GM13977 (cell line): ENCODE measurements at regions of chr9 and their contacts with region 1.

Region 1: DNA sequence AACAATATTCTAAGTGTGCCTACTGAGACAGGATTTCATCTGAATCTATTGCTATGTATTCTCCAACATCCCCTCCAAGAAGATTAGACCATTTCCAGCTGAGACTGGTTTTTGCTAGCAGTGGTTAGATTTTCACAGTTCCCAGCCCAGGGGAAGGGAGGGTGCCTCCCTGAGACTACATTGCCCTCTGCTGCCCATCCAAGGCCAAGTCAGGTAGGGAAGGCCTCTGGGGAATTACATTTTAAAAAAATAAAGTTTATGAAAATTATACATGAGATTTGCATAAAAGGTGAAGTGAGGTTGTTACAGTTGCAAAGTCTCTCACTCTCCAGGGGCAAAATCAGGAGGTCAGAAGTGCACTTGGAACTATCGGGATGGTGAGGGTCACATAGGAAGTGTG is 28.0 kb upstream of the SYK start:
- DNase-seq: no peak
- CTCF ChIP-seq: peak; percentile 44

Region 2: GRCh38 chr9:90240541-90240940 is 533.1 kb before region 1 on chr9:
- in situ Hi-C with region 1: loop called (anchors 25 kb)
- DNase-seq: no peak
- CTCF ChIP-seq: no peak

Region 3: GRCh38 chr9:90870621-90871326 is 97.2 kb after region 1 on chr9:
- in situ Hi-C with region 1: loop called (anchors 25 kb)
- DNase-seq: peak; percentile 62
- CTCF ChIP-seq: peak; percentile 86